MCF 10A (cell line): ENCODE measurements at regions of chr2 and their contacts with region 1.

Region 1: DNA sequence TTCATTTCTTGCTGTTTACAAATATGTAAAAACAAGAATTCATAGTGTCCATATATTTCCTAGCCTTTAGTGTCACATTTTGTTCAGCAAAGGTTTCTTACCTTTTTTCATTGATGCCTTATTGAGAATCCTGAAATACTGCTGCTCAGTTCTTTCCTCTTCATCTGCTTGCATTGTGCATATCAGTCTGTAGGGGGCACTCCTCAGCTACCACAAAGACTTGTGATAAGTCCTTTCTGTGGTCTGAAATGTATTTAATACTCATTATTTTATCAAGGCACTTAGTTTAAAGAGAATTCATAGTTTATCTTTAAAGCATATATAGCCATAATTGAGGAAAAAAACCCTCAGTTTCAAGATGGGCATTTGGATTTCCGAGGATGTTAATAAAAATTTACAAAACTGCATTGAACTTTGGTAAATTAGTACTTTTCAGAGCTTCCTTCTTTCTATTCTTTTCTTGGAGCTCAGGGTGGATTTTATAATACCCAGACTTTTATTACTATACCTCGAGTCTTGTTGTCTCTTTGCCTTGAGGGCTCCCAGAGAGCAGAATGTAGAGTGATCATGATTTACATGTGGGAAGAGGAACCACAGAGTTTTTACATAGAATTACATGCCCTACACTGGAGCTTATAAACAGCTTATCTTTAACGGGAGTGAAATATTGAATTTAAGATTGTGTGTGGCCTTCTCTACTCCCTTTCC is 570.1 kb downstream of the PLCL1 start:
- DNase-seq: peak; percentile 77
- H3K4me3 Mint-ChIP-seq: no peak overlapping the region
- H3K27ac Mint-ChIP-seq: no peak overlapping the region
- H3K4me1 Mint-ChIP-seq: no peaks in the 10 kb centered on the region
- H3K27me3 Mint-ChIP-seq: peaks cover 61% of the 10 kb centered on the region
- CTCF ChIP-seq: peak; percentile 62

Region 2: GRCh38 chr2:198448789-198449188 is 74.3 kb after region 1 on chr2:
- CTCF ChIA-PET with region 1: no interaction called
- POLR2A ChIA-PET with region 1: no interaction called
- intact Hi-C with region 1: no loop called
- DNase-seq: no peak
- H3K4me3 Mint-ChIP-seq: no peak overlapping the region
- H3K27ac Mint-ChIP-seq: no peak overlapping the region
- H3K4me1 Mint-ChIP-seq: no peaks in the 10 kb centered on the region
- H3K27me3 Mint-ChIP-seq: no peaks in the 10 kb centered on the region
- CTCF ChIP-seq: no peak

Region 3: DNA sequence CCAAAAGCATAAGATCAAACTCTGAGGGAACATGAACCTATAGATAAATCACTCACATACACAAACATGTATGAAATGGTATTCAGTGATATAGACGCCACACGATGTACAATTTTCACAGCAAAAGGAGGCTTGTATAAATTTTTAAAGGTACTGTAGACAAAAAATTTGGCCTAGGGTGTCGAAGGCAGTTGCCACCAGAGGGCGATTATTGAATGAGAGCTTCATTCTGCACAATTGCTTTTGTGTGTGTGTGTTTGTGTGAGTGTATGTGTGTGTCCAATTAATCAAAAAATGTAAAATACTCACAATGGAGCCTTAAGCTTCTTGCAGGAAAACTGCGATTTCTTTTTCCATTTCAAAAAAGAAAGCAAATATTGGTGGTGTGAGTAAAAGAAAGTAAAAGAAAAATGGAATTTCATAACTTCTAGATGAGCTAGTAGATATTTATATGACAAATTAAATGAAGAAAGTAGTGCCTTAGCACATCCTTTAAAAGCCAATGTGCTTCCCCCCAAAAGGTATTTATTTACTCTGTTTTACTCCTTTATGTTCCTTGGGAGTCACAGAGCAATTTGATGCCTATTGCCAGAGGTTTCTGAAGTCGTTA is 283.1 kb after region 1 on chr2:
- CTCF ChIA-PET with region 1: no interaction called
- POLR2A ChIA-PET with region 1: no interaction called
- intact Hi-C with region 1: loop called (anchors 1 kb)
- DNase-seq: peak; percentile 38
- H3K4me3 Mint-ChIP-seq: no peak overlapping the region
- H3K27ac Mint-ChIP-seq: no peak overlapping the region
- H3K4me1 Mint-ChIP-seq: no peaks in the 10 kb centered on the region
- H3K27me3 Mint-ChIP-seq: peaks cover 71% of the 10 kb centered on the region
- CTCF ChIP-seq: peak; percentile 49